ENCODE measurements at regions of chr17 and their contacts with region 1.

Region 1: GRCh38 chr17:76427501-76428231 is 25.3 kb downstream of the UBE2O start:
- DNase-seq: peak; percentile 84
- H3K4me3 ChIP-seq: peak overlapping the region in 1 of 3 experiments; percentile 28
- H3K27ac ChIP-seq: peak overlapping the region; percentile 45
- H3K4me1 ChIP-seq: peaks cover 22% of the 10 kb centered on the region
- H3K27me3 ChIP-seq: no peaks in the 10 kb centered on the region
- CTCF ChIP-seq: no peak
- POLR2A ChIP-seq: no peak

Region 2: GRCh38 chr17:76417499-76418143 is 10.0 kb before region 1 on chr17:
- CTCF ChIA-PET with region 1: interaction called, 10 read pairs
- POLR2A ChIA-PET with region 1: no interaction called
- dilution Hi-C with region 1: no loop called
- intact Hi-C with region 1: no loop called
- DNase-seq: no peak
- H3K4me3 ChIP-seq: no peak overlapping the region
- H3K27ac ChIP-seq: no peak overlapping the region
- H3K4me1 ChIP-seq: no peaks in the 10 kb centered on the region
- H3K27me3 ChIP-seq: no peaks in the 10 kb centered on the region
- CTCF ChIP-seq: no peak
- POLR2A ChIP-seq: no peak

Region 3: GRCh38 chr17:76527430-76528111 is 99.9 kb after region 1 on chr17:
- CTCF ChIA-PET with region 1: no interaction called
- POLR2A ChIA-PET with region 1: no interaction called
- dilution Hi-C with region 1: no loop called
- intact Hi-C with region 1: no loop called
- DNase-seq: peak; percentile 66
- H3K4me3 ChIP-seq: no peak overlapping the region
- H3K27ac ChIP-seq: no peak overlapping the region
- H3K4me1 ChIP-seq: peaks cover 23% of the 10 kb centered on the region
- H3K27me3 ChIP-seq: no peaks in the 10 kb centered on the region
- CTCF ChIP-seq: peak; percentile 20 to 26
- POLR2A ChIP-seq: no peak